A673 (cell line): ENCODE measurements at regions of chr5 and their contacts with region 1.

Region 1: GRCh38 chr5:59673438-59674058 is 220.0 kb downstream of the PDE4D start:
- DNase-seq: peak; percentile 66
- H3K4me3 ChIP-seq: no peak overlapping the region
- H3K27ac ChIP-seq: no peak overlapping the region
- H3K4me1 ChIP-seq: no peaks in the 10 kb centered on the region
- H3K27me3 ChIP-seq: no peaks in the 10 kb centered on the region
- CTCF ChIP-seq: peak; percentile 85

Region 2: GRCh38 chr5:59390074-59390659 is 283.4 kb before region 1 on chr5:
- CTCF ChIA-PET with region 1: no interaction called
- POLR2A ChIA-PET with region 1: no interaction called
- intact Hi-C with region 1: loop called (anchors 5 kb)
- DNase-seq: peak; percentile 35
- H3K4me3 ChIP-seq: no peak overlapping the region
- H3K27ac ChIP-seq: no peak overlapping the region
- H3K4me1 ChIP-seq: no peaks in the 10 kb centered on the region
- H3K27me3 ChIP-seq: peaks cover 5% of the 10 kb centered on the region
- CTCF ChIP-seq: peak; percentile 71

Region 3: GRCh38 chr5:59506285-59506877 is 167.2 kb before region 1 on chr5:
- CTCF ChIA-PET with region 1: interaction called, 12 read pairs
- POLR2A ChIA-PET with region 1: no interaction called
- intact Hi-C with region 1: loop called (anchors 1 kb)
- DNase-seq: no peak
- H3K4me3 ChIP-seq: no peak overlapping the region
- H3K27ac ChIP-seq: no peak overlapping the region
- H3K4me1 ChIP-seq: no peaks in the 10 kb centered on the region
- H3K27me3 ChIP-seq: peaks cover 6% of the 10 kb centered on the region
- CTCF ChIP-seq: peak; percentile 55

Region 4: DNA sequence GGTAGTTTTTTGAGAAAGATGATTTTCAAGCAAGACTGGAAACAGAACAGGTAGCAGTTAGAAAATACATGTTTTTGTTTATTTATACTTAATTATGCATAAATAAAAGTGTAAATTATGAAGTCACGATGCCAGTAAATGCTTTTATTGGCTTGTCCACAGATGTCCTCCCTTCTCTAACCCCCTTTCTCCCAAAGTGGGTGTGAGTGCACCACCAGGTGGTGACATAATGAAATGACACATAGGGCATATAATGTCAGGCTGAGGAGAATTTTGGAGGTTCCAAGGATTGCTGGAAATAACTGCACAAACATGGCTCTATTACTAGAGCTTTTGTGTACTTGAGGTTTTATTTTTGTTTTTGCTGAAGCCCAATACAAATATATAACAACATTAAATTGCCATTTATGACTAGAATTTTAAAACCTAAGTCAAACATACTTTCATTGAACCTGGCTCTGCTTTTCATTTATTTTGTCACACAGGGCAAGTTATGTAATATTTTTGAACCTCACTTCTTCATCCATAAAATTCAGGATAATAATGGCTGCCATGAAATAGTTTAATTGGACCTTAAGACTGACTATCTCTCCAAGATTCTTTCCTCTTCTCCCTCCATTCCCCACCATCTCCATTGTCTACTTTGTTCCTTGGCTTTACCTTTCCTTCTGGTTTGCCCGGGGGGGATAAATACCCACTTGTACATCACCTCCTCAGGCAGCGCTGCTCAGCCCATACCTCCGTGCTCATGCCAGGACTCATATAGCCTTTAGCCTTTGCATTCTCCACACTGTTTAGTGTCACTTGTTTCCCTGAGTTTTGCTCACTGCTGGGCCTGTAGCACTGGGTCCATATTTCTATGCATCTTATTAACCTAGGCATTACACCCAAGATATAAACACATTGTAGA is 51.2 kb after region 1 on chr5:
- CTCF ChIA-PET with region 1: no interaction called
- POLR2A ChIA-PET with region 1: no interaction called
- intact Hi-C with region 1: loop called (anchors 10 kb)
- DNase-seq: peak; percentile 69
- H3K4me3 ChIP-seq: no peak overlapping the region
- H3K27ac ChIP-seq: no peak overlapping the region
- H3K4me1 ChIP-seq: no peaks in the 10 kb centered on the region
- H3K27me3 ChIP-seq: peaks cover 8% of the 10 kb centered on the region
- CTCF ChIP-seq: peak; percentile 78

Region 5: GRCh38 chr5:59799668-59800346 is 126.3 kb after region 1 on chr5:
- CTCF ChIA-PET with region 1: interaction called, 3 read pairs
- POLR2A ChIA-PET with region 1: no interaction called
- intact Hi-C with region 1: loop called (anchors 5 kb)
- DNase-seq: peak; percentile 73
- H3K4me3 ChIP-seq: no peak overlapping the region
- H3K27ac ChIP-seq: no peak overlapping the region
- H3K4me1 ChIP-seq: no peaks in the 10 kb centered on the region
- H3K27me3 ChIP-seq: peaks cover 16% of the 10 kb centered on the region
- CTCF ChIP-seq: peak; percentile 76